GM18951 (cell line): ENCODE measurements at regions of chr5 and their contacts with region 1.

Region 1: GRCh38 chr5:96336351-96336985 is 96.6 kb downstream of the PCSK1 start:
- POLR2A ChIP-seq: no peak

Region 2: DNA sequence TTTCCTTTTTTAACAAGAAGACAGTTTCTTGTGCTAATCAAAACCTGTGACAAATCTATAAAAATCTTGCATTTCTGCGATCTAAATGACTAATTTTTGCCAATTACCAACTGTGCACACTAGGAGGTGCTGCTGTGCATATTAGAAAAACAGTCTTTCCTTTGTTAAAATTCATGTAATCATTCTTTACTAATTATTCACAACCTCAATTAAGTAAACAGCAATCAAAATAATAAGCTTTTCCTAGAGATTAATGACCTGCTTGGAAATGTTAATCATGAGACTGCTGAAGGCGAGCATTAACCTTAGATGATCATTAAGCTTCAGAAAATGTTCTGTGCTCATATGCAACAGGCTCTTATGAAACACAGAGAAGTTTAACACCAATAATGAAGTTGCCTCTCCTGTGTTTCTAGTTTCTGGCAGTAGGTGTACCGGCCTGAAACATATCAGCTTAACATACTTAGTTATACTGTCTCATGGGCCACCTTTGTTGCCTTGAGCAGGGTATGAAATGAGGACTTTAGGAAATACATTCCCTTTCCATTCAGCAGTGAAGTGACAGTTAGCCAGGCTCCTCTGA is 672.2 kb before region 1 on chr5:
- in situ Hi-C with region 1: loop called (anchors 25 kb)
- POLR2A ChIP-seq: no peak

Region 3: DNA sequence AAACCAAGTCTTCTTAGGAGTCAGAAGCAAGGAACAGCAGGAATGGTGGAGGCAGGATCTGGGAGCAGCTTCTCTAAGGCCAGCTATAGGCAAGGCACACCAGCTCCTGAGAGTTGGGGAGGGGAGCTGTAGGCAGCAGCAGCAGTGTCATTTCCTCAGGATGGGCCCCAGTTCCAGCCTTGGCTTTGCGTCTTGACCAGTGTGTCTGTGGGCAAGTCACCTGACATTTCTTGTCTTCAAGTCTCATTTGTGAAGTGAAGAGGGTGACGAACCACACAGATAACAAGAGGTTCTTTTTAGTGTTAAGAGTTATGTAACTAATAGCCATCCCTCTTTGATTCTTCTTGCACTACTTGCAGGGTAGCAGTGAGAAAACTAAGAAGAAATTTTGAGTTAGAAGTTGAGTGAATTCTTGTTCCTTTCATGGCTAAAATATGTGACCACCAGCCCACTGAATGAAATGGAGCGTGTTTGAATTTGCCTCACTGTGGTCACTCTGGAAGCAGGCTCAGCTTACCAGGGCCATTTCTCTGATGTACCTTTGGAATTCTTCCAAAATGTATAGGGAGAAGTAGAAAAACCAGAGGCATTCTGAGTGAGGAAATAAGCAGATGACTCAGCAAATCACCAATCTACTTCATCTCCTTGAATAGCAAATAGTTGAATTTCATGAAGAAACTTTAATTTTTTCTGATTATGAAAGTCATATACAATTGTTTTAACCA is 563.0 kb before region 1 on chr5:
- in situ Hi-C with region 1: loop called (anchors 10 kb)
- POLR2A ChIP-seq: no peak